ENCODE measurements at regions of chr11 and their contacts with region 1.

Region 1: GRCh38 chr11:118565051-118565450 is 680 bp downstream of the IFT46 start:
- DNase-seq: peak in 4 of 10 donors; percentile 17 to 51 (median 36)
- H3K4me3 ChIP-seq: peak overlapping the region in 50 of 59 donors; percentile 11 to 92 (median 76)
- H3K27ac ChIP-seq: peak overlapping the region in 7 of 59 donors; percentile 16 to 83 (median 55)
- H3K27me3 ChIP-seq: no peaks in the 10 kb centered on the region
- CTCF ChIP-seq: no peak

Region 2: GRCh38 chr11:118180300-118180703 is 384.7 kb before region 1 on chr11:
- intact Hi-C with region 1: loop called in 1 of 2 experiments (anchors 10 kb)
- DNase-seq: peak; percentile 76 to 95 (median 93)
- H3K4me3 ChIP-seq: peak overlapping the region; percentile 10 to 62 (median 46)
- H3K27ac ChIP-seq: peak overlapping the region in 58 of 59 donors; percentile 20 to 96 (median 86)
- H3K27me3 ChIP-seq: no peaks in the 10 kb centered on the region
- CTCF ChIP-seq: peak in 40 of 56 donors; percentile 12 to 61 (median 30)

Region 3: DNA sequence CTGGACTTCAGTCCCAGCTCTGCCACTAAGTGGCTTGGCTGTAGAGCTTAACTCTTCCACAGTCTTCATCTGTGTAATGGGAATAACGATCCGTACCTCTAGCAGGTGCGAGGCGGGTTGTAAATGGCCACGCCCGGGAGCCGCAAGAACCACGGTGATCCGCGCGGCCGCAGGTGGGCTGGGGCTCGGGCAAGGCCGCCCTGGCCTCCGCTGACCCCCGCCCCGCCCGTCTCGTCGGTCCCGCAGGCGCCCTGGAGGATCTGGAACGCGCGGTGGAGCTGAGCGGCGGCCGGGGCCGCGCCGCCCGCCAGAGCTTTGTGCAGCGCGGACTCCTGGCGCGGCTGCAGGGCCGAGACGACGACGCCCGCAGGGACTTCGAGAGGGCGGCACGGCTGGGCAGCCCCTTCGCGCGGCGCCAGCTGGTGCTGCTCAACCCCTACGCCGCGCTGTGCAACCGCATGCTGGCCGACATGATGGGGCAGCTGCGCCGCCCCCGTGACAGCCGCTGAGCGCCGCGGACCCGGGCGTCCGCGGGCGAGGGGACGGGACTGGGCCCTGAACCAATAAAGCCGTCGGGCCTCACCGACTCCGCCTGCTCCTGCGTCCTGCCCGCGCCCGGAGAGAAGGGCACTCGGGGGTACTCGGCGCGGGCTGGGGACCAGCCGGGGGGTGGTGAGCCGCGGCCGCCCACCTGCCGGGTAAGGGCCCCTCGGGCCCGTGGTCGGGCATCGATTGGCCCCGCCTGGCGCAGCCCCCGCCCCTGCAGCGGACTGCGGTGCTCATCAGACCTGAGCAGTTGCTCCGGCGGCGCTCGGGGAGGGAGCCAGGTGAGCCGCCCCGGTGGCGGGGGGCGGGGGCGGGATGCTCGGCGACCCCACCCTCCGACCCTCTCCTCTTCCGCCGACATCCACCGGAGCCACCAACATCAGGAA is 34.4 kb before region 1 on chr11 and contains the start of gene TMEM25:
- intact Hi-C with region 1: loop called (anchors 1 to 2 kb)
- DNase-seq: peak; percentile 58 to 85 (median 74)
- H3K4me3 ChIP-seq: peak within 1 kb of the TSS; percentile 70 to 95 (median 87)
- H3K27ac ChIP-seq: peak within 1 kb of the TSS; percentile 13 to 93 (median 84)
- H3K27me3 ChIP-seq: no peaks in the 10 kb centered on the region
- CTCF ChIP-seq: peak in 13 of 56 donors; percentile 6 to 38 (median 15)
- total RNA-seq, gene TMEM25: 38.0 to 110 (median 78.5) TPM

Region 4: GRCh38 chr11:118649941-118650340 is 84.9 kb after region 1 on chr11:
- intact Hi-C with region 1: no loop called
- DNase-seq: peak in 2 of 10 donors; percentile 7 to 10
- H3K4me3 ChIP-seq: no peak overlapping the region
- H3K27ac ChIP-seq: peak overlapping the region in 6 of 59 donors; percentile 8 to 55 (median 29)
- H3K27me3 ChIP-seq: no peaks in the 10 kb centered on the region
- CTCF ChIP-seq: no peak

Measured in dorsolateral prefrontal cortex (tissue), 120 donors.